HepG2 (cell line): ENCODE measurements at regions of chr17 and their contacts with region 1.

Region 1: DNA sequence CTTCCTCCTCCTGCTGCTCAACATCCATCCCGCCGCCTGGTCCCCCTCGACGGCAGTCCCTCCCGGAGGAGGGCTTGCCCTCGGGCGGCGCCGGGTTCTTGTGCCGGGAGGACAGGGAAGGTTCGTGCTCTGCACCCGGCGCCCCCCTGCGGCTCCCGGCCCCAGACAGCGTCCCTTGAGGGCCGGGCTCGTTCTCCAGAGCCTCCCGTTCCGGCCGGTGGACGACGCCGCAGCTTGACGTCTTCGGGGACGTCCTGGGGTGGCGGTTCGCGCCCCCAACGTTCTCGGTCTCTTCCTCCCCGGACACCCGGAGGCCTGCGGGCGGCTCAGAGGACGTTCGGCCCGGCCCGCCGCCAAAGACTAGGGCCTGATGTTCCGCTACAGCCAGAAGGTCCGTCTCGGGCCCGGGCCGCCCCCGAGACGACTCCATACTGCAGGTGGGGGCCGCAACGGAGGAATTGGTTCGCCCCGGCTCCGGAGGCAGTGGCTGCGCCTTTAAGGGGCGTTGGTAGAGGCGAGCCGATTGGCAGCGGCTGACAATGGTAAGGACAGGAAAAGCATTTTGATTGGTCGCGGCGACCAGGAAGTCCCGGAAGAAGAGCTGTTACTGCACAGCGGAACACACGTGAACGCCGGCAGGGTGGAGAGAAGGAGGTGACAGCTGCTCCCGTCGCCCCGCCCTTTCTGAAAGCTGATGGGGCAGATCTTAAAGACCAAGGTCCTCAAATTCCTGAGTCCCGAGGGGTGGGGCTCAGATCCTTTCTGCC is at the start of gene BORCS6:
- DNase-seq: peak; percentile 95
- ATAC-seq: peak; percentile 67
- H3K4me3 ChIP-seq: peak within 1 kb of the TSS; percentile 74 to 92 (median 77)
- H3K27ac ChIP-seq: peak within 1 kb of the TSS; percentile 64
- H3K4me1 ChIP-seq: peaks cover 47% of the 10 kb centered on the region
- H3K27me3 ChIP-seq: no peaks in the 10 kb centered on the region; a peak in 1 of 5 replicates
- CTCF ChIP-seq: peak; percentile 47
- EP300 ChIP-seq: peak in 1 of 2 experiments; percentile 6; a peak in 1 of 4 replicates
- POLR2A ChIP-seq: peak; percentile 30 to 46; a peak in 2 of 4 replicates
- RAD21 ChIP-seq: peak; percentile 18; the same call in 1 of the 2 replicates
- total RNA-seq, gene BORCS6: 5.1 and 5.3 TPM in 2 replicates

Region 2: GRCh38 chr17:8138672-8139371 is 51.1 kb before region 1 on chr17:
- CTCF ChIA-PET with region 1: interaction called, 6 read pairs
- POLR2A ChIA-PET with region 1: interaction called, 4 read pairs
- in situ Hi-C with region 1: no loop called
- intact Hi-C with region 1: loop called (anchors 5 kb)
- DNase-seq: peak; percentile 96
- ATAC-seq: peak; percentile 93
- H3K4me3 ChIP-seq: peak overlapping the region; percentile 71 to 86 (median 79)
- H3K27ac ChIP-seq: peak overlapping the region; percentile 74
- H3K4me1 ChIP-seq: peaks cover 36% of the 10 kb centered on the region
- H3K27me3 ChIP-seq: no peaks in the 10 kb centered on the region; a peak in 1 of 5 replicates
- CTCF ChIP-seq: peak; percentile 70
- EP300 ChIP-seq: peak in 1 of 2 experiments; percentile 51; a peak in 2 of 4 replicates
- POLR2A ChIP-seq: no peak
- RAD21 ChIP-seq: peak; percentile 84

Region 3: GRCh38 chr17:8209909-8210760 is 20.2 kb after region 1 on chr17 and contains the start of gene AURKB:
- CTCF ChIA-PET with region 1: no interaction called
- POLR2A ChIA-PET with region 1: interaction called, 105 read pairs
- in situ Hi-C with region 1: no loop called
- intact Hi-C with region 1: no loop called
- DNase-seq: peak; percentile 96
- ATAC-seq: peak; percentile 82
- H3K4me3 ChIP-seq: peak within 1 kb of the TSS; percentile 71 to 87 (median 75)
- H3K27ac ChIP-seq: peak within 1 kb of the TSS; percentile 91
- H3K4me1 ChIP-seq: peaks cover 41% of the 10 kb centered on the region
- H3K27me3 ChIP-seq: no peaks in the 10 kb centered on the region; a peak in 1 of 5 replicates
- CTCF ChIP-seq: no peak
- EP300 ChIP-seq: no peak
- POLR2A ChIP-seq: peak; percentile 88 to 89
- RAD21 ChIP-seq: no peak
- total RNA-seq, gene AURKB: 67.7 and 75.3 TPM in 2 replicates

Region 4: GRCh38 chr17:8294814-8295316 is 105.0 kb after region 1 on chr17:
- CTCF ChIA-PET with region 1: no interaction called
- POLR2A ChIA-PET with region 1: interaction called, 18 read pairs
- in situ Hi-C with region 1: no loop called
- intact Hi-C with region 1: no loop called
- DNase-seq: no peak
- ATAC-seq: peak; percentile 18
- H3K4me3 ChIP-seq: peak overlapping the region; percentile 60 to 79 (median 72)
- H3K27ac ChIP-seq: peak overlapping the region; percentile 88
- H3K4me1 ChIP-seq: peaks cover 45% of the 10 kb centered on the region
- H3K27me3 ChIP-seq: no peaks in the 10 kb centered on the region
- CTCF ChIP-seq: no peak
- EP300 ChIP-seq: no peak
- POLR2A ChIP-seq: peak in 1 of 2 experiments; percentile 67; a peak in 2 of 4 replicates
- RAD21 ChIP-seq: no peak

Region 5: GRCh38 chr17:8326511-8327302 is 136.8 kb after region 1 on chr17:
- CTCF ChIA-PET with region 1: no interaction called
- POLR2A ChIA-PET with region 1: no interaction called
- in situ Hi-C with region 1: no loop called
- intact Hi-C with region 1: no loop called
- DNase-seq: no peak
- ATAC-seq: peak; percentile 82
- H3K4me3 ChIP-seq: peak overlapping the region; percentile 47 to 75 (median 48); a peak in 5 of 6 replicates
- H3K27ac ChIP-seq: no peak overlapping the region
- H3K4me1 ChIP-seq: peaks cover 29% of the 10 kb centered on the region
- H3K27me3 ChIP-seq: peaks cover 2 to 34% of the 10 kb centered on the region in 2 experiments; a peak in 4 of 5 replicates
- CTCF ChIP-seq: peak; percentile 36
- EP300 ChIP-seq: no peak
- POLR2A ChIP-seq: no peak
- RAD21 ChIP-seq: no peak